MCF 10A (cell line): ENCODE measurements at regions of chr5 and their contacts with region 1.

Region 1: GRCh38 chr5:170791325-170791954 is 7.9 kb downstream of the GABRP start:
- DNase-seq: peak; percentile 88
- H3K4me3 Mint-ChIP-seq: no peak overlapping the region
- H3K27ac Mint-ChIP-seq: no peak overlapping the region
- H3K4me1 Mint-ChIP-seq: no peaks in the 10 kb centered on the region
- H3K27me3 Mint-ChIP-seq: no peaks in the 10 kb centered on the region
- CTCF ChIP-seq: peak; percentile 94

Region 2: DNA sequence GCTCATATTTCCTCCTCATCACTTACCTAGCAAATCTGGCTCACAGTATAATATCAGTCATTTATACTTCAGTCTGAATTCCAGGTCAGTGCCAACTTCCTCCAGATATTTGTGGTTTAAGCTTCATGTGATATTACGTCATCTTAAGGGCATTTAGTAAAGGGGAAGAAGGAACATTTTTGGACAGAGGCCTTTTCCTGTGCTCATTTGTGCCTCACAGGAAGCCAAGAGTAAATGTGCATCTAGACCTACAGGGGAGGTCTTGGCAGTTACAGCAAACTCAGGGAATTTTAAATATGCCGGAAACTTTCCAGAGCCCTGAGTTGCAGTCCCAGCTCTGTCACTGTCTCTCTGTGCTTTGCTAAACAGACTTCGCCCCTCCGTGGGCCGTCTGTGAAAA is 300.0 kb before region 1 on chr5:
- CTCF ChIA-PET with region 1: no interaction called
- POLR2A ChIA-PET with region 1: no interaction called
- intact Hi-C with region 1: no loop called
- DNase-seq: peak; percentile 82
- H3K4me3 Mint-ChIP-seq: no peak overlapping the region
- H3K27ac Mint-ChIP-seq: no peak overlapping the region
- H3K4me1 Mint-ChIP-seq: peaks cover 11% of the 10 kb centered on the region
- H3K27me3 Mint-ChIP-seq: peaks cover 19% of the 10 kb centered on the region
- CTCF ChIP-seq: no peak

Region 3: GRCh38 chr5:170638454-170639220 is 152.8 kb before region 1 on chr5:
- CTCF ChIA-PET with region 1: interaction called, 202 read pairs
- POLR2A ChIA-PET with region 1: interaction called, 4 read pairs
- intact Hi-C with region 1: loop called (anchors 1 kb)
- DNase-seq: peak; percentile 84
- H3K4me3 Mint-ChIP-seq: no peak overlapping the region
- H3K27ac Mint-ChIP-seq: no peak overlapping the region
- H3K4me1 Mint-ChIP-seq: peaks cover 19% of the 10 kb centered on the region
- H3K27me3 Mint-ChIP-seq: no peaks in the 10 kb centered on the region
- CTCF ChIP-seq: peak; percentile 98

Region 4: DNA sequence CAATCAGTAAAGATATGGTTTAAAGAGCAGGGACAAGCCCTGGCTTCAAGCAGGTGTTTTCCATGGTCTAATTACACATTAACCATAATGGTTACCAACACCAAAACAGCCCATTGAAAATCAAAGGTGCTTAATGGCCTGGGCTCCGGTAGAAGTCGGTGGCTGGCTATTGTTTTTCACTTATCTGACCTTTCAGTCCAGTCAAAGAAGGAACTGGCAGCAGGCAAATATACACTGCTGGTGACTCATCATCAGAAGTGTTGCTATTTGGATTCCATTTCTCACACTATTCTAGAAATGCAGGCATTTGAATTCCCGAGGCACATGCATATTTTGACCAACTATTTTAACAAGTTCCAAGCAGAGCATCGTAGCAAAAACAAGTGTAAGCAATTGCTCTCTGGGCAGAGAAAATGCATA is 34.2 kb before region 1 on chr5:
- CTCF ChIA-PET with region 1: interaction called, 992 read pairs
- POLR2A ChIA-PET with region 1: interaction called, 9 read pairs
- intact Hi-C with region 1: no loop called
- DNase-seq: peak; percentile 77
- H3K4me3 Mint-ChIP-seq: no peak overlapping the region
- H3K27ac Mint-ChIP-seq: peak overlapping the region; percentile 84
- H3K4me1 Mint-ChIP-seq: peaks cover 45% of the 10 kb centered on the region
- H3K27me3 Mint-ChIP-seq: no peaks in the 10 kb centered on the region
- CTCF ChIP-seq: no peak

Region 5: DNA sequence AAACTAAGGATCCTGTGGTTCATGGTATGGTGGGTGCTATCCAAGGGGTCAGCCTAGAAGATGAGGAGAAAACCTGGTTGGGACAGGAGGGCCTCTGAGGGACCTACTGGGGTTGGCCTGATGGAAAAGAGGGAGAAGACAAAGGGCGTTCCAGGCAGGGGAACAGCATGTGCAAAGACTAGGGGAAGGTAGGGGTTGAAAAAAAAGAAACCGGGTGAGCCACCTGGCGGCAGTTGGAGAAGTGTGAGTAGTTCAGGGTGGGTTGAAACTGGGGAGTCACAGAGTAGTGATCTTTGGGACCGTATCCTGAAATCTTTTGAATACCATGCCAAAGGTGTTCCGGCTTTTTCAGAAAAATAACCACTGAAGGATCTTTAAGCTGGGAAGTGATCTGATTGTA is 16.6 kb before region 1 on chr5:
- CTCF ChIA-PET with region 1: interaction called, 102 read pairs
- POLR2A ChIA-PET with region 1: interaction called, 3 read pairs
- intact Hi-C with region 1: no loop called
- DNase-seq: no peak
- H3K4me3 Mint-ChIP-seq: no peak overlapping the region
- H3K27ac Mint-ChIP-seq: no peak overlapping the region
- H3K4me1 Mint-ChIP-seq: peaks cover 5% of the 10 kb centered on the region
- H3K27me3 Mint-ChIP-seq: no peaks in the 10 kb centered on the region
- CTCF ChIP-seq: no peak

Region 6: GRCh38 chr5:170832254-170832653 is 40.8 kb after region 1 on chr5:
- CTCF ChIA-PET with region 1: interaction called, 13 read pairs
- POLR2A ChIA-PET with region 1: no interaction called
- intact Hi-C with region 1: no loop called
- DNase-seq: no peak
- H3K4me3 Mint-ChIP-seq: no peak overlapping the region
- H3K27ac Mint-ChIP-seq: no peak overlapping the region
- H3K4me1 Mint-ChIP-seq: no peaks in the 10 kb centered on the region
- H3K27me3 Mint-ChIP-seq: no peaks in the 10 kb centered on the region
- CTCF ChIP-seq: no peak